Activated CD4-positive, alpha-beta T cell treated with anti-CD3 and anti-CD28 coated beads for 36 hours (primary cell): ENCODE measurements at regions of chr18 and their contacts with region 1.

Region 1: GRCh38 chr18:9334329-9334972 is at the start of gene TWSG1:
- DNase-seq: peak; percentile 95
- ATAC-seq: peak; percentile 86
- H3K4me3 Mint-ChIP-seq: peak within 1 kb of the TSS; percentile 82
- H3K27ac Mint-ChIP-seq: peak within 1 kb of the TSS; percentile 67
- H3K4me1 Mint-ChIP-seq: peaks cover 22% of the 10 kb centered on the region
- H3K27me3 Mint-ChIP-seq: peaks cover 3% of the 10 kb centered on the region
- total RNA-seq, gene TWSG1: 7.9 to 8.8 TPM

Region 2: GRCh38 chr18:8608795-8609658 is 725.4 kb before region 1 on chr18 and contains the start of gene RAB12:
- CTCF ChIA-PET with region 1: no interaction called
- POLR2A ChIA-PET with region 1: no interaction called
- intact Hi-C with region 1: loop called in 1 of 2 experiments (anchors 2 kb)
- DNase-seq: peak; percentile 92
- ATAC-seq: peak; percentile 88
- H3K4me3 Mint-ChIP-seq: peak within 1 kb of the TSS; percentile 90
- H3K27ac Mint-ChIP-seq: peak within 1 kb of the TSS; percentile 91
- H3K4me1 Mint-ChIP-seq: peaks cover 47% of the 10 kb centered on the region
- H3K27me3 Mint-ChIP-seq: no peaks in the 10 kb centered on the region
- total RNA-seq, gene RAB12: 12.4 to 12.8 TPM

Region 3: GRCh38 chr18:9017170-9017904 is 317.1 kb before region 1 on chr18:
- CTCF ChIA-PET with region 1: no interaction called
- POLR2A ChIA-PET with region 1: no interaction called
- intact Hi-C with region 1: loop called in 1 of 2 experiments (anchors 1 kb)
- DNase-seq: peak; percentile 92
- ATAC-seq: peak; percentile 100
- H3K4me3 Mint-ChIP-seq: peak overlapping the region; percentile 42
- H3K27ac Mint-ChIP-seq: peak overlapping the region; percentile 72
- H3K4me1 Mint-ChIP-seq: peaks cover 14% of the 10 kb centered on the region
- H3K27me3 Mint-ChIP-seq: no peaks in the 10 kb centered on the region

Region 4: DNA sequence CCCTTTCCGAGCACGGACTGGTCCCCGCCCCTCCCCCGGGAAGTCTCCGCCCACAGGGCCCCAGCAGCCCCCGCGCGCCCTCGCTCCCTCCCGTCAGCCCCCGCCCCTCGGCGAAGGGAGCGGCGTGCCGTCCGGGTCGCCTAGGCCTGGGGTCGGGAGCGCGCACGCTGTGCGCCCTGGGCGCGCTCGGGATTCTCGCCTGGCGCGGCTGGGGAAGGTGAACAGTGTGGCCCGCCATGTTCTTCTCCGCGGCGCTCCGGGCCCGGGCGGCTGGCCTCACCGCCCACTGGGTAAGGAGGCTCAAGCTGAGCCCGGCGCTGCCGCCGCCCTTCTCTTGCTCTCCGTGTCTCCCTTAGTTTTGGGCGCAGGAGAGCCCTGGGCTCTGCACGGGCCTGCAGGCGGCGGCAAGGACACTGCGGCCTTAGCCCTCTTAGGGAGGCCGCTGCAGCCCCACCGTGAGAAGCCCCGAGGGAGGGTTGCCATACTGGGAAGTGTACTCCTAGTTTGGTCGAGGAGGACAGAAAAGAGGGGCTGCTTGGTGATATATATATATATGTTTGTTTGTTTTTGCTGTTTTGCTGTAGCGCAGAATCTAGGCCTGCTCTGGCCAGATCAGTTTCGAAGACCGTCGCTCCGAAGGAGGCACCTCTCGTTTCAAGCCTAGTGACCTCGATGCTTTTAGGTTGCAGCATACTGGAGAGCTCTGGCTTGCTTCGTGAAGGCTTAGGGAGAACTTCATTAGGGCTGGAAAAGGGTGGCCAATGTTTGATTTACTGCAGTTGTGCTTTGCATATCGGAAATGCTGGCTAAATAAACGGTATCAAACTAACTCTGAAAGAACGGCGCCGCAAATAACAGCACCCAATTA is 231.7 kb before region 1 on chr18 and contains the start of gene NDUFV2:
- CTCF ChIA-PET with region 1: no interaction called
- POLR2A ChIA-PET with region 1: no interaction called
- intact Hi-C with region 1: loop called in 1 of 2 experiments (anchors 1 kb)
- DNase-seq: peak; percentile 99
- ATAC-seq: peak; percentile 88
- H3K4me3 Mint-ChIP-seq: peak within 1 kb of the TSS; percentile 89
- H3K27ac Mint-ChIP-seq: peak within 1 kb of the TSS; percentile 97
- H3K4me1 Mint-ChIP-seq: peaks cover 40% of the 10 kb centered on the region
- H3K27me3 Mint-ChIP-seq: no peaks in the 10 kb centered on the region
- total RNA-seq, gene NDUFV2: 331 to 372 TPM

Region 5: DNA sequence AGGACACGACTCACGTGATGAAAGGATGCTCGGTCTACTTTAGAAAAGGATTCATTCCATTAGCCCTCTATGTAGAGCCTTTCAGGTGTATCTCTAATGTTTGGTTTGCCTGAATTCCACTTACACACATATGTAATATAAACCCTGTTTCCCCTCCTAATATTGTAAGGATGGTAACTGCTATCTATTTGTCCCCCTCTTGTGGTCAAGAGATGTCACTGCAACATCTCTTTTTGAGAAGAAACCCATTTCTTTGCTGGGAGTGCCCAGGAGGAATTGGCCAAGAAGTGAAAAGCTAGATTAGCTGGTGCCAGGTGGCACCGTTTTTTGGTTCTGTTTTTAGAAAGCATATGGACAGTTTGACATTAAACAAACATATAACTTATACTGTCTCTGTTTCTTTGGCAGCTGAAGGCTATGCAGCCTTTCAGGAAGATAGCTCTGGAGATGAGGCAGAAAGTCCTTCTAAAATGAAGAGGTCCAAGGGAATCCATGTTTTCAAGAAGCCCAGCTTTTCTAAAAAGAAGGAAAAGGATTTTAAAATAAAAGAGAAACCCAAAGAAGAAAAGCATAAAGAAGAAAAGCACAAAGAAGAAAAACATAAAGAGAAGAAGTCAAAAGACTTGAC is 182.1 kb after region 1 on chr18:
- CTCF ChIA-PET with region 1: interaction called, 3 read pairs
- POLR2A ChIA-PET with region 1: no interaction called
- intact Hi-C with region 1: loop called (anchors 1 to 5 kb)
- DNase-seq: peak; percentile 10
- ATAC-seq: peak; percentile 47
- H3K4me3 Mint-ChIP-seq: no peak overlapping the region
- H3K27ac Mint-ChIP-seq: no peak overlapping the region
- H3K4me1 Mint-ChIP-seq: peaks cover 2% of the 10 kb centered on the region
- H3K27me3 Mint-ChIP-seq: no peaks in the 10 kb centered on the region

Region 6: DNA sequence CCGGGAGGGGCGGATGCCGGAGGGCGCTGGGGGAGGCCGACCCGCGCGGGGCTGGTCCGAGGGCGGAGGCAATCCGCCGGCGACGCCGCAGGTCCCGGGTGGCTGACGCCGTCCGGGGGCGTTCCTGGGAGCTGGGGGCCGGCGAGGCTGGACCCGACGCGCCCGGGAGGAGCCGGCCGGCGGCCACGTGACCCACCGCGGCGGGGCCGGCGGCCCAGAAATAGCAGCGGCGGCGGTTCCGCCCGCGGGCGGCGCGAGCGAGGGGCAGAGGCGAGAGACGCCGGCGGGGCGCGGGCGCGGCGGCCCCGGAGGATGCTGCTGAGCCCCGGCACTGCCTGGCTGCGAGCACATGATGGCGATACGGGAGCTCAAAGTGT is 373.6 kb after region 1 on chr18 and contains the start of gene RAB31:
- CTCF ChIA-PET with region 1: no interaction called
- POLR2A ChIA-PET with region 1: no interaction called
- intact Hi-C with region 1: loop called in 1 of 2 experiments (anchors 10 kb)
- DNase-seq: peak; percentile 47
- ATAC-seq: peak; percentile 34
- H3K4me3 Mint-ChIP-seq: peak within 1 kb of the TSS; percentile 76
- H3K27ac Mint-ChIP-seq: no peak within 1 kb of the TSS
- H3K4me1 Mint-ChIP-seq: peaks cover 42% of the 10 kb centered on the region
- H3K27me3 Mint-ChIP-seq: peaks cover 71% of the 10 kb centered on the region
- total RNA-seq, gene RAB31: 0.48 to 1.8 TPM